ENCODE measurements at regions of chr4 and their contacts with region 1.

Region 1: DNA sequence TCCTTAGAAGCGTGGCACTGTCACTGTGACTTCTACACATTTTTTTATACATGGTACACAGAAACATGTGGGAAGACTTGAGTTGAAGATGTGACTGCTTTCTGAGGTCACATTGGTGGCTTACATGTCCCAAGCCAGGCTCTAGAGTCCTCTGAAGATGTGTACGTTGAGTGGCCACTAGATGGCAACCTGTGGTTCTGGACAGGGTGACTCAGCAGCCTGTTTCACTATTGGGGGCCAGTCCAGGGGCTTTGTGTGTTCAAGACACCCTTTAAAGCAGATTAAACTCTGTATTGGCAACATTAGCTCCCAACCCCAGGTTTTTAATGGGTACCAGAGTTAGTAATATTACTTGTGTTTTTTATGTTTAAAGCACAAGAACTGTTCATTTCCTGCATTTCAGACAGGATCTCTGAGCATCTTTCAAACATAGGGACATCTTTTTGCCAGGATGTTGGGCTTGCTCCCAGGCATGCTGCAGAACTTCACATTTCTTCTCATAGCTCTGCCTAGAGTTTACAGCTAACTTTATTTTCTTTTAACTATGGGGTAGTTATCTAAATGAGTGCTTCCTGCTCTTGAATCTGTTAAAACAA is 53.0 kb downstream of the DCUN1D4 start:
- DNase-seq: peak; percentile 60
- H3K4me3 Mint-ChIP-seq: no peak overlapping the region
- H3K27ac Mint-ChIP-seq: no peak overlapping the region
- H3K4me1 Mint-ChIP-seq: peaks cover 14% of the 10 kb centered on the region
- H3K27me3 Mint-ChIP-seq: no peaks in the 10 kb centered on the region

Region 2: DNA sequence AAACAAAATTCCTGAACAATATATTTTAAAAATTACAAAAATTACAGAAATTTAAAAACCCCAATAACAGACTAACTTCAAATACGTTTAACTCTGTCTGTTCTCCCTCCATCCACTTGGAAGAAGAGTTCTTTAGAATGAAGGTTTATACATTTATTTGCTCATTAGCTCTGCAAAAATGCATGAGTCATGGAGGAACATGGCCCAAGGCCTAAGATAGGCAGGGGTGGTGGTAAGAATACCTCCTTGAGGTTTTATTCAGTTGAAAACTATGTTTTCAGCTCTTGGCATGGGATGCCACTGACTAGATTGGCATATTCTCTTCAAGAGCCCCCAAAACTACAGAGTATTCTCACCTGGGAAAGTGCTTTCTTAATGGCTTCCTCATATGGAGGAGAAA is 133.1 kb after region 1 on chr4:
- CTCF ChIA-PET with region 1: interaction called, 5 read pairs
- intact Hi-C with region 1: loop called (anchors 1 kb)
- DNase-seq: no peak
- H3K4me3 Mint-ChIP-seq: no peak overlapping the region
- H3K27ac Mint-ChIP-seq: no peak overlapping the region
- H3K4me1 Mint-ChIP-seq: no peaks in the 10 kb centered on the region
- H3K27me3 Mint-ChIP-seq: no peaks in the 10 kb centered on the region